GM13976 (cell line): ENCODE measurements at regions of chr5 and their contacts with region 1.

Region 1: DNA sequence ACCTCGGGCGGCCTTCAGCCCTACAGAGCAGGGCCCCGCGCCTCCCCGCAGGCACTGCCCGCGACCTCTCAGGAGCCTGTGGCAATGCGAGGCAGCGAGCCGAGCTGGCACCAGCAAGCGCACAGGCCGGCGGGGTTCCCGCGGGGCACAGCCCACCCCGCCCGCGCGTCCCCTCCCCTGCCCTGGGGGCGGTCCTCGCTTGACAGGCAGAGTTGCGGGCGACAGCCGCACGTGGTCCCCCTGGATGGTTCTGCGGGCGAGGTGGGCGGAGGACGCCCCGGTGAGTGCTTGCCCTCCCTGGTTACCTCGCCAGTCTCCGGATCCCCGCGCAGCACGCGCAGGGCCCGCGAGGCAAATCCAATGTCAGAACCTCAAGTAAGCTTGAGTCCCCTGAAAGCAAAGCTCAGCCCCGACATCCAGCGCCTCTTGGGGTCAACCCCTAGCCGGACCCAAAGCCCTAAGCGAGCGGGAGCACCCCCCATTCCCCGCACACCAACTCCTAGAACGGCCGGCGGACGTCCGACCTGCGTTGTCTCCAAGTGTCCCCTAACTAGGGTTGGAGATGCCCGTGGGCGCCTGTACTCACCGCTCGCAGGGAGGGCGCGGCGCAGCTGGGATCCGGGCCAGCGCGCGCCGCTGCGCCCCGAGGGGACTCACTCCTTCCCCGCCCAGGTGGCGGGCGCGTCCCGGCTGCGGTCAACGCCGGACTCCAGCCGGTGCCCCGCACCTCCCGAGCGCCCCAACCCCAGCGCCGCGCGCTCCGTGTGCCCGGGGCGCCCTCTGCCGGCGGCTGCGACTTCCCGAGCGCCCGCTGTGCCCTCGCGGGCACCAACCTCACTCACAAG is at the start of gene DRD1:
- DNase-seq: peak; percentile 82
- CTCF ChIP-seq: peak; percentile 72

Region 2: DNA sequence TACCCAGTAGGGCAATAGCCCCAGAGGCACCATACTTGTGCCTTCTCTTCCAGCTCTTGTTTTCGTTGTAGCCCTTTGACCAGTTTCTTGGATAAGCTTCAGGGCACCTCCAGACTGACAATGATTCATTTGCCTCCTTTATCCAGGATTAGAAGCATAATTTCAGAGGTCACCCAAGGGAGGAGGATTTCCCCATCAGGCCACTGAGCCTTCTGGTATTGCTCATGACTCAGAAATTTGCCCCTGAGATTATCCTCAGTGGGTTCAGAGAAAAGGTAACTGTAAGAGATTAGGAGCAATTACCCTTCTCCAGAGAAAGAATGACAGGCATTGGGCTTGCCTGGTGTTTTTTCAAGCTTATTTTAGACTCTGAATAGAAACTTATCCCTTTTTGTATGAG is 572.0 kb before region 1 on chr5:
- in situ Hi-C with region 1: no loop called
- DNase-seq: no peak
- CTCF ChIP-seq: no peak

Region 3: GRCh38 chr5:174951146-174951780 is 493.0 kb before region 1 on chr5:
- in situ Hi-C with region 1: loop called (anchors 10 kb)
- DNase-seq: peak; percentile 79
- CTCF ChIP-seq: peak; percentile 85